ENCODE measurements at regions of chr11 and their contacts with region 1.

Region 1: DNA sequence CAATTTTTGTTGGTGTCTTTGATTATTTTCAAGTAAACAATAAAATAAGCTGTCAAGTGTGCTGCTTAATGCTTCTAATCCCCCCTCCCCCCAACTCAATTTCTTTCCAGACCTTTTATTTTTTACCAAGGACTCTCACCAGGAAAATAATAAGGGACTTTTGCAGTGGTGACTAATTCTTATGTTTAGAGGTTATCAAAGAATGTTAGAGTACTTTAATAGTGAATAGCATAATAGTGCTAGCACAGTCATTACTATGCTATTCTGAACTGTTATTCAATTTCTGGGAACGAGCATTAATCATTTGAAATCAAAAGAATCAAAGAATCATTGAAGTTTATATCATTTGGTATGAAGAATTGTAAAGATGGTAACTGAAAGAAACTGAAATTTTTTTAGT is 251.4 kb downstream of the DDX10 start:
- DNase-seq: no peak
- H3K4me3 ChIP-seq: no peak overlapping the region
- H3K27ac ChIP-seq: no peak overlapping the region
- H3K4me1 ChIP-seq: peaks cover 5% of the 10 kb centered on the region
- H3K27me3 ChIP-seq: no peaks in the 10 kb centered on the region
- CTCF ChIP-seq: no peak

Region 2: DNA sequence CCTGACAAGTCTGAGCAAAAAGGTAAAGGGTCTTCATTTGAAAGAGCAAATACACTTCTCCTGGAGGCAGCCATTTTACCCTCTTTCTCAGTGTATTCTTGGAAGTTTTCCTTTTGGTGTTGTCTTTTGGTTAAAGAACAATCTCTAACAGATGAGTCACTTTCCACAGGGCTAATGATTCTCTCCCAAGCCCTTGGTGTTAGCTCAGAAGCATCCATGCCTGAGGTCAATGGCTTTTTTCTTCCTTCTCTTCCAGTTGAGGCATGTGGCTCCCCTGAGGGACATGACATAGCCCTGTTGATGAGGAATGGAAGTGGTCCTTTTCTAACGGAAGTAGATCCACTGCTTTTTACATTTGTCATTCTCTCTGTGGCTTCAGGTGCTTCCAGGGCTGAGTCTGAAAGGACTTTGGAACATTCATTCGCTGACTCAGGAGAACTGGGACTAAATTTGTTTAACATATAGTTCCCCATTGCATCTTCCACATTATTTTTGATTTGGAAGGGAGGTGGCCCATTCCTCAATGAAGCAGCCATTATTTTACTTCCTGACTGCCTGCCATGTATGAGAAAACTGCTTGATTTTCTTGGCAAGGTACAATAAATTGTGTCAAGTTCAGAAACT is 404.3 kb before region 1 on chr11:
- CTCF ChIA-PET with region 1: no interaction called
- POLR2A ChIA-PET with region 1: no interaction called
- intact Hi-C with region 1: no loop called
- DNase-seq: no peak
- H3K4me3 ChIP-seq: no peak overlapping the region
- H3K27ac ChIP-seq: no peak overlapping the region
- H3K4me1 ChIP-seq: no peaks in the 10 kb centered on the region
- H3K27me3 ChIP-seq: no peaks in the 10 kb centered on the region
- CTCF ChIP-seq: no peak

Region 3: DNA sequence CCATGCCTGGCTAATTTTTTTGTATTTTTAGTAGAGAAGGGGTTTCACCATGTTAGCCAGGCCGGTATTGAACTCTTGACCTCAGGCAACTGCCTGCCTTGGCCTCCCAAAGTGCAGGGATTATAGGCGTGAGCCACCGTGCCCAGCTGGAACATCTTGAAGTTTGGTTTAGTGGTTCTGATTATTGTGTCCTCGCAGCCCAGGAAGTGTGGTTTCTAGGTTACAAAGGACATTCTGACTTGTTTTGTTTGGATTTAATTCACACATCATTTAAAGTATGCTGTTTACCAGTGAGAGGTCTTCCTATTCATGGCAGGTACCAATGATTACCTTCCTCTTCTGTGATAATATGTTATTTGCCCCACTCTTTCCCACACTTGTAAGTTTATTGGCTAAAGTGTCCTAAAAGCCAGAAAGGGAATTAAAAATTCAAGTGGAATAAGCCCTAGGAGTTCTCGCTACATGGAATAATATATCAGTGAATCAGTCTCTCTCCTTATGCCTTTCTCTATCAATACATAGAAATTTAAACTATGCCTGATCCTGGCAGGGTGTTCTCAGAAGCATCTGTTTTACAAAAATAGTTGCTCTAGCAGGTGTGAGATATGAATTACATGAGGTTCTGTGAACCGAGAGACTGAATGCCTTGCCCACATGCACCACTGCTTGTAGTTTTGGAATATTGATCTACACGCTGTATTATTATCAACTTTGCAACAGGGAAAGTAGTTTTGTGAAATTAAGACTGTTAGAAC is 11.7 kb after region 1 on chr11:
- CTCF ChIA-PET with region 1: no interaction called
- POLR2A ChIA-PET with region 1: no interaction called
- intact Hi-C with region 1: loop called (anchors 1 kb)
- DNase-seq: peak; percentile 46
- H3K4me3 ChIP-seq: no peak overlapping the region
- H3K27ac ChIP-seq: no peak overlapping the region
- H3K4me1 ChIP-seq: peaks cover 22% of the 10 kb centered on the region
- H3K27me3 ChIP-seq: no peaks in the 10 kb centered on the region
- CTCF ChIP-seq: no peak

Region 4: DNA sequence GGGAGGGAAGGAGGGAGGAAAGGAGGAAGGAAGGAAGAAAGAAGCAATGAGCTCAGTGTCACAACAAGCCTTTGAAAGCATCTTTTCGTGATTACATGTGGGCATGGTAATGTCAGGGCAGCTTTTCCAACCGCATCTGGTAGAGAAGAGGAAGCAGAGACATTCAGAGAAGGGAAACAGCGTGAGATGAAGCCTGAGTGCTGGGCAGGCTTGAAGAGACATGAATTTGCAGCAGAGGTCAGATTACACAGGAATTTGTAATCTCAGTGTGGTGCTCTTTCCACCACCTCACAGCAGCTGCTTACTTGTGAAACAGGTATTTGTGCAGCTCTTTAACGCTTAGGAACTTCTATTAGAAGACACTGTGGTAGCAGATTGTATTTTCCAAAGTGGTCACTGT is 216.2 kb after region 1 on chr11:
- CTCF ChIA-PET with region 1: no interaction called
- POLR2A ChIA-PET with region 1: no interaction called
- intact Hi-C with region 1: no loop called
- DNase-seq: no peak
- H3K4me3 ChIP-seq: no peak overlapping the region
- H3K27ac ChIP-seq: no peak overlapping the region
- H3K4me1 ChIP-seq: no peaks in the 10 kb centered on the region
- H3K27me3 ChIP-seq: no peaks in the 10 kb centered on the region
- CTCF ChIP-seq: no peak

Measured in A673 (cell line).